AG04449 (cell line): ENCODE measurements at regions of chr10 and their contacts with region 1.

Region 1: DNA sequence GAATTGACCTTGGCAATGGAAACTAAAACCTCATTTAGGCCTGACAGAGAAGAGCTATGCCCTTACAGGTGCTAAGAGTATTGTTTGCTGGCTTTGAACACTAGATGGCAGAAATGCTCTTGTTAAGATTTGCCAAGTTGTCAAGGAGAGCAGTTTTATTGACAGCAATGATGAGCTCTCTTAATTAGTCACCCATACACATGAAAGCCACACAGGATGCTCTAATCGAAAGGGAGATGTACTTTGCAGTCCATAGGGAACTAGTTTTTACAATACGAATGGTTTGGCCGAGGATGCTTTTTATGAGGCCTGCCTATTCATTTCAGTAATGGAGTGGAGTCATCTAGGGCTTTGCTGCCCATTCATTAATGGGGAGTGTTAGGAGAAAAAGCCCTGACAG is 45.4 kb upstream of the MBL2 start:
- DNase-seq: no peak
- H3K4me3 ChIP-seq: no peak overlapping the region
- CTCF ChIP-seq: peak; percentile 54

Region 2: DNA sequence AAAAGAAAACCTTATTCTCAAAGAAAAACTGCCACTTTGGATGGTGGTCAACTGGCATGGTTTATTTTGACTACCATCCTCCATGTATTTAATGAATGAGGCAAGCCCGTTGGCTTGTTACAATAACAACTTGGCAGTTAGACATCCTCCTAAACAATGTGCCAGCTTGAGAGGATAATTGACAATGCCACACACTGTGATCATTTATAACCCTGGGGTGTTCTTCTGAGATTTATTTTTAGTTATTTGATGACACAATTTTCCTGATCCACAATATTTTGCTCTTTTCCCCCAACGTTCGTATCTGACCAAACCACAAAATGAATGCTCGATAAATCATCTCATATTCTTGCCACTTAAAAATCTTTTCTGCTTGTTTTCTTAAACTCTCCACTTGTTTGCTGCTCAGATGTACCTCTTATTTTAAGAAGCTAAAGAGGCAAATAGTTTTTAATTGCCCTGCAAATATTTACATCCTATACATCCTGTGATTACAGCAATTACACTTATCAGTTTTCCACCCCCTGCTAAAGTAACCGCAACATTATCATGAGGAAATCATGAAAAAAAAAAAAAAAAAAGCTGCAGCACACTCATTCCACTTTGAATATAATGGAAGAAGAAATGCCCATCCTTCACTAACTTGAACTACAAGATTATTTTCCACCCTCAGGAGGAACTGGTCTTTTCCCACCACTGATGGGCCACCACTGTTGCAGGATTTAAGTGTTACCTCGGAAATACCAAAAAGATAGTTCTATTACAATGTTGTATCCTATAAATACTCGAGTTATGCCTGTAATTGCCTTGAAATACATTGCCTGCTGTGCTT is 165.4 kb before region 1 on chr10:
- CTCF ChIA-PET with region 1: no interaction called
- POLR2A ChIA-PET with region 1: no interaction called
- DNase-seq: no peak
- H3K4me3 ChIP-seq: no peak overlapping the region
- CTCF ChIP-seq: no peak

Region 3: DNA sequence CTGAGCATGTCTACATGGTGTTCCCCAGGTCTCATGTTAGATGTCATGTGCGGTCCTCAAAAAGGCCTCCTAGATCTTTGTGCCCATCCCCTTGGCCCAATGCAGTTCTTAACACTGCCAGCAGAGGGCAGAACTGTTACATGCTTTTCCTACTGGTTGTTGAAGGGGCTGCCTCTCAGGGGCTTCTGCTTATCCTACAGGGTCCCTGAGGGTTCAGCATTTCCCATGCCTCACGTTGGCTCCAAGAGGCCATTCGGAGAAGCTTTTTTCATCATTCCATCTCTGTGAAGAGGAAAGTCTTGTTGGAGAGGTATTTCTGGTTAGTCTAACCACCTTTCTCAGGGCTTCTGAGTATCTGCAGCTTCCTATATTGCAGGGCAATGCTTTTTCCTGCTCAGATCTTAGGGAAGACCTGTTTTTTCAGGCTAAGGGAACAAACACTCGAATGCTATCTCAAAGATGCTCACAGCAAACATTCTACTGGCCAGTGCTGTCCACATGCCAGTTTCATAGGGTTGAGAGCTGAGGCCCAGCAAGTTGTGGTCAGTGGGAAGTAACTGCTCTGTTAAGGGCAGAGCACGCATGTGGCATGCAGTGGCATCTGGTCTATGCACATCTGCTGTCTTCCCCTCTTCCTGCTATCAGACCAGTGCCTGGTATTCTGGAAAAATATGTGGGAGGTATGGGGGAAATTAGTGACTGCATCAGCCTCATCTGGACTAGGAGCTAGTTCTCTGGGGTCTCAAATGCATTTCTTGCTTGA is 76.9 kb before region 1 on chr10:
- CTCF ChIA-PET with region 1: no interaction called
- POLR2A ChIA-PET with region 1: no interaction called
- DNase-seq: no peak
- H3K4me3 ChIP-seq: no peak overlapping the region
- CTCF ChIP-seq: peak; percentile 77

Region 4: GRCh38 chr10:52836816-52837215 is 18.8 kb after region 1 on chr10:
- CTCF ChIA-PET with region 1: interaction called, 16 read pairs
- POLR2A ChIA-PET with region 1: no interaction called
- DNase-seq: no peak
- H3K4me3 ChIP-seq: no peak overlapping the region
- CTCF ChIP-seq: no peak

Region 5: GRCh38 chr10:52883996-52884871 is 66.2 kb after region 1 on chr10:
- CTCF ChIA-PET with region 1: interaction called, 20 read pairs
- POLR2A ChIA-PET with region 1: no interaction called
- DNase-seq: peak; percentile 33
- H3K4me3 ChIP-seq: no peak overlapping the region
- CTCF ChIP-seq: peak; percentile 74